ENCODE measurements at regions of chr13 and their contacts with region 1.

Region 1: DNA sequence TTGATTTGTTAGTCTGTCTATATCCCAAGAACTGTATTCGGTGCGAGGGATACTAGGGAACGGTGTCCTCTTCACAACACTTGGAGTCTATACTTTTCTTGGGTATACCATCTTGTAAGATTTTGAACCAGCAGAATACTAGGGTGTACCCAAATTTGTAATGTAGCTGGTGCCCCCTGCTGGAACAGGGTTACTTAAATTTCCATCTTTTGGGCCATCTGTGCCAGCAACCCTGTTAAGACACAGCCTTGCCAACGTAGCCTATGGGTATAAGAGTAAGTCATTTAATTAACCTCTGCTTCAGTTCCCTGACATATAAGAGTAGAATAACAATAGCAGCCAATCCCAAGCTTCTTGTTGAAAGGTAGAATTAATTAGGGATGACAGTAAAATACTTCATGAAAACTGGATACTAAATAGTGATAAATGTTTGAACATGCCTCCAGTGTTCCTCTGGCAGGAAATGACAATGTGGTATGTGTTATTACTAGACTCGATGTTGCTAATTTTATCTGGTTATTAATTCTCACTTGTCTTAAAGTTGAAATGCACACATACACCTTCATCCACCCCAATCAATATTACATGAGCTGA is 607.6 kb downstream of the FGF9 start:
- DNase-seq: peak; percentile 59
- H3K4me3 Mint-ChIP-seq: no peak overlapping the region
- H3K27ac Mint-ChIP-seq: no peak overlapping the region
- H3K4me1 Mint-ChIP-seq: no peaks in the 10 kb centered on the region
- H3K27me3 Mint-ChIP-seq: no peaks in the 10 kb centered on the region
- CTCF ChIP-seq: no peak

Region 2: DNA sequence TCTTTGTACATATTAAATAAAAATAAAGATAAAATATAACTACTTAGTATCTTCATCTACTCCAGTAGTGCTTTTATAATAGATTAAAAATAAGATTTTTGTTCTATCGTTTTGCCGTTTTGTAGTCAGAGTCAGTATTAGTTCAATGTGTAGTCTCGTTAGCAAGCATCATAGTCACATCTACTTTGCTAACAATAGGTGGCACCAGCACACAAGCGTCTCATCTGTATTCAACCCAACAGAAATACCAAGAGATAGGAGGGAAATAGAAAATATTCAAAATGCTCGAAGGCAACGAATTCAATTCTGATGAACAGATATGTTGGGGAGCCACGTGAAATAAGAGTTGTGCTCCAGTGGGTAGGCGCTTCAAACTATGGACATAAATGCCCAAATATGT is 653.1 kb before region 1 on chr13:
- CTCF ChIA-PET with region 1: no interaction called
- intact Hi-C with region 1: loop called (anchors 5 kb)
- DNase-seq: peak; percentile 14
- H3K4me3 Mint-ChIP-seq: no peak overlapping the region
- H3K27ac Mint-ChIP-seq: no peak overlapping the region
- H3K4me1 Mint-ChIP-seq: no peaks in the 10 kb centered on the region
- H3K27me3 Mint-ChIP-seq: peaks cover 18% of the 10 kb centered on the region
- CTCF ChIP-seq: no peak

Region 3: DNA sequence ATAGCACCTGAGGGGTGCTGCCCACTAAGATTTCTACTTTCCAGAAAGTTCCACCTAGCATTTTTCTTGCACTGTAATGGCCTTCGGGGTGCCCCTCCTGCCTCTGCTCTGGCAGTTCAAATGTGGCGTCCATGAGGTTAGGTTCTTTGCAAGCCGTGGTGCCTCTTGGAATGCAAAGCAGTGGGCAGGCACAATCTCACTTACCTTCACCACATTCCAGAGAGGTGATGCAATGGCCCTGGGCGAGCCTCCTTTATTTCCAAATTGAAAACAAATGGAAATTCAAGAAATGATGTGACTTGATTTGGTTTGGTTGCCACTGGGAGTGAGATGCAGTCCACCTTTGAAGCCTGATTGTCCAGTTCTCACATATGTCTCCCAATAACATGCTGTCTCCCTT is 560.6 kb before region 1 on chr13:
- CTCF ChIA-PET with region 1: no interaction called
- intact Hi-C with region 1: no loop called
- DNase-seq: no peak
- H3K4me3 Mint-ChIP-seq: no peak overlapping the region
- H3K27ac Mint-ChIP-seq: no peak overlapping the region
- H3K4me1 Mint-ChIP-seq: no peaks in the 10 kb centered on the region
- H3K27me3 Mint-ChIP-seq: peaks cover 31% of the 10 kb centered on the region
- CTCF ChIP-seq: no peak

Region 4: GRCh38 chr13:22196777-22197176 is 81.7 kb before region 1 on chr13:
- CTCF ChIA-PET with region 1: no interaction called
- intact Hi-C with region 1: loop called (anchors 2 kb)
- DNase-seq: peak; percentile 1
- H3K4me3 Mint-ChIP-seq: no peak overlapping the region
- H3K27ac Mint-ChIP-seq: no peak overlapping the region
- H3K4me1 Mint-ChIP-seq: no peaks in the 10 kb centered on the region
- H3K27me3 Mint-ChIP-seq: no peaks in the 10 kb centered on the region
- CTCF ChIP-seq: no peak